HCT116 (cell line): ENCODE measurements at regions of chr14 and their contacts with region 1.

Region 1: GRCh38 chr14:73759714-73760597 is 45.8 kb upstream of the PNMA1 start:
- DNase-seq: peak; percentile 88
- ATAC-seq: peak; percentile 86
- H3K4me3 ChIP-seq: peak overlapping the region; percentile 79
- H3K27ac ChIP-seq: peak overlapping the region; percentile 95
- H3K4me1 ChIP-seq: peaks cover 29 to 65% of the 10 kb centered on the region in 2 experiments
- H3K27me3 ChIP-seq: no peaks in the 10 kb centered on the region
- CTCF ChIP-seq: no peak
- POLR2A ChIP-seq: peak; percentile 76
- RAD21 ChIP-seq: no peak

Region 2: DNA sequence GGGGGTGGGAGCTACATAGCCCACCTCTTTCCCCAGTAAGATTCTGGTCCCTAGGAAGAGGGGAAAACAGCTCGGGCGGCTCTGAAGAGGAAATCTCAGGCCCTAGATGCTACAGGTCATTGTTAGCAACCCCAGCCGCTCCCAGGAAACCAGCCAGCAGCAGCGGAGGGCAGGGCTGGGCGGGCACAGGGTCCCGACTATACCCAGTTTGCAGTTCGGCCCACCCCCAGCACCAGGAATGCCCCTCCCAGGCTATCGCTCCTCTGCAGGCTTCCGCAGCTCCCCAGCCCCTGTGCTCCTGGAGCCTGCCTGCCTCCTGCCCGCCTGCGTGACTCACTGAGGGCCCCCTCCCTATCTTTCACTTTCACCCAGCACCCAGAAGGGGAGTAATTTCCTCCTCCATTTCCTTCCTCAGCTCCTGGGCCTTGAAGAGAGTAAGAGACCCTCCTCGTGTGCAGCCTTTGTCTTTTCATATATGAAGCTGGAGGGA is 18.5 kb before region 1 on chr14:
- CTCF ChIA-PET with region 1: interaction called, 27 read pairs
- POLR2A ChIA-PET with region 1: interaction called, 14 read pairs
- RAD21 ChIA-PET with region 1: interaction called in 1 of 2 experiments, 6 read pairs
- intact Hi-C with region 1: loop called (anchors 1 kb)
- DNase-seq: no peak
- ATAC-seq: peak; percentile 67
- H3K4me3 ChIP-seq: peak overlapping the region; percentile 37 to 52
- H3K27ac ChIP-seq: peak overlapping the region; percentile 84
- H3K4me1 ChIP-seq: peaks cover 66 to 72% of the 10 kb centered on the region in 2 experiments
- H3K27me3 ChIP-seq: no peaks in the 10 kb centered on the region
- CTCF ChIP-seq: no peak
- POLR2A ChIP-seq: no peak
- RAD21 ChIP-seq: no peak

Region 3: DNA sequence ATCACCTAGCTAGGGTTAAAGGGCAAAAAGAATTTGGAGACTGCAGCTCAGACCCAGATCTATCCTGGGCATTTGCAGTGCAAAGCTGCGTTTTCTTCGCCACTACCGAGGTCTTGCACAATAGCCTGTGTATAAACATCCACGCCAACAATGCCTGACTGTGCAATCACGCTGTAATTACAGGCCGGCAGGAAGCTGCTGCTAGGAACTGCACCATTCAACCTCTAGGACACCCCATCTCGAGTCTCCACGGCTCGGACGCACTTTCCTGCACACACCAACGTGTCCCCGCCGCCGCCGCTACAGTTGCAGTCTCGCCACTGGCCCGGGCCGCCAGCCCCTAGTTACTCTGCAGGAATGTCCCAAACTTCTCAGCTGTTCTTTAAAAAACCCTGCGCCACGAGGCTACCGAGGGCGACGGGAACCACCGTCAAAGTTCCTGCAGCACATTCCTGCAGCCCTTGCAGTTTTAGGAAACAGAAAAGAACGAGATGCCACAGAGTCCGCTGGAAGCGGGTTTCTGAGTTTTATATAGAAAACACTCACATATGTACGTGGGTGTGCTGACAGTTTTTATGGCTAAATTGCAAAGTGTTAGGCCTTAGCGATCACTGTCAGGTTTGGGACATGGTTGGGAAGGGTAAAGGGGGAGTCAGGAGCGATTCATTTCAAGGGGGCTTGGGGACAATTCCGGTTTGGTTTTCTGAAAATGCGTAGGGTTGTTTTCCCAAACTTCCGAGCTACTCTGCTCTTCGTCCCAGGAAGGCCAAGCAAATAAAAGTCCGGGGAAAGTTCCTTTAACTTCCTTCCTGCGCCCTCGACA is 26.1 kb after region 1 on chr14:
- CTCF ChIA-PET with region 1: interaction called, 4 read pairs
- POLR2A ChIA-PET with region 1: interaction called, 11 read pairs
- RAD21 ChIA-PET with region 1: no interaction called
- intact Hi-C with region 1: loop called (anchors 1 kb)
- DNase-seq: peak; percentile 46
- ATAC-seq: peak; percentile 67
- H3K4me3 ChIP-seq: peak overlapping the region; percentile 68 to 74
- H3K27ac ChIP-seq: peak overlapping the region; percentile 94
- H3K4me1 ChIP-seq: peaks cover 22 to 31% of the 10 kb centered on the region in 2 experiments
- H3K27me3 ChIP-seq: no peaks in the 10 kb centered on the region
- CTCF ChIP-seq: peak in 1 of 3 experiments; percentile 2; a peak in 1 of 6 replicates
- POLR2A ChIP-seq: no peak
- RAD21 ChIP-seq: no peak

Region 4: DNA sequence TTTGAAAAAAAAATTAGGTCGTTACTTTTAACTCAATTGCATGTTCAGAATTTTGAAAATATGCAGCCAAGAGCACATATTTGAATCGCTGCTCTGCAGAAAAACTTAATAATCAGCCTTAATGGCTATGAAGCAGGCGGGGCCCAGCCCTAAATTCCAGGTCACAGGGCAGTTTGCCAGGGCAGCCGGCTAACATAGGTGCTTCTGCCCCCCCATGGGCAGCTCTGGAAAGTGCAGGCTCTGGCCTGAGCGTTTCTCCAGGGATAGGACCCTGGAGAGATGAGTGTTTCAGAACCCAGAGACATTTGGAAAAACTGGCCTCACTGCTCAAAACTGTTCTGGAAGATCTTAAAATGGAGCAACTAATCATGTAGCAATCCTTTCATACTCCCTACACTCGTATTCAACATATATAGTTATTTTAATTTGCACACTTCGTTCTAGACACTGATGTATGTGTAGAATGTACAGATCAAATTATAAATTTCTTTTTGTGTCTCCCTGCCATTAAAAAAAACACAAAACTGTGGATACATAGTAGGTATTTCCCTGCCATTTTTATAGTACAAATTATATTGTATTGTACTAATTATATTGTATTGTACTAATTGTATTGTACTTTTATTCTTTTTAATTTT is 65.7 kb after region 1 on chr14:
- CTCF ChIA-PET with region 1: no interaction called
- POLR2A ChIA-PET with region 1: interaction called, 4 read pairs
- RAD21 ChIA-PET with region 1: interaction called in 1 of 2 experiments, 11 read pairs
- intact Hi-C with region 1: loop called (anchors 1 kb)
- DNase-seq: peak; percentile 76
- ATAC-seq: peak; percentile 96
- H3K4me3 ChIP-seq: no peak overlapping the region
- H3K27ac ChIP-seq: no peak overlapping the region
- H3K4me1 ChIP-seq: peaks cover 0 to 10% of the 10 kb centered on the region in 2 experiments; a peak in 2 of 4 replicates
- H3K27me3 ChIP-seq: no peaks in the 10 kb centered on the region
- CTCF ChIP-seq: peak; percentile 84 to 90 (median 90)
- POLR2A ChIP-seq: no peak
- RAD21 ChIP-seq: peak; percentile 89

Region 5: GRCh38 chr14:73851644-73852382 is 91.9 kb after region 1 on chr14 and contains the start of gene PTGR2:
- CTCF ChIA-PET with region 1: interaction called, 8 read pairs
- POLR2A ChIA-PET with region 1: interaction called, 4 read pairs
- RAD21 ChIA-PET with region 1: no interaction called
- intact Hi-C with region 1: loop called (anchors 5 kb)
- DNase-seq: peak; percentile 94
- ATAC-seq: peak; percentile 89
- H3K4me3 ChIP-seq: peak within 1 kb of the TSS; percentile 81 to 94
- H3K27ac ChIP-seq: peak within 1 kb of the TSS; percentile 97
- H3K4me1 ChIP-seq: peaks cover 17 to 30% of the 10 kb centered on the region in 2 experiments
- H3K27me3 ChIP-seq: no peaks in the 10 kb centered on the region
- CTCF ChIP-seq: 0 out of 6 replicates have a peak, but pooled peaks of 1 of the 3 experiments have one; percentile 4
- POLR2A ChIP-seq: peak; percentile 69
- RAD21 ChIP-seq: 0 out of 2 replicates have a peak, but pooled peaks have one; percentile 6
- total RNA-seq, gene PTGR2: 22.1 TPM

Region 6: DNA sequence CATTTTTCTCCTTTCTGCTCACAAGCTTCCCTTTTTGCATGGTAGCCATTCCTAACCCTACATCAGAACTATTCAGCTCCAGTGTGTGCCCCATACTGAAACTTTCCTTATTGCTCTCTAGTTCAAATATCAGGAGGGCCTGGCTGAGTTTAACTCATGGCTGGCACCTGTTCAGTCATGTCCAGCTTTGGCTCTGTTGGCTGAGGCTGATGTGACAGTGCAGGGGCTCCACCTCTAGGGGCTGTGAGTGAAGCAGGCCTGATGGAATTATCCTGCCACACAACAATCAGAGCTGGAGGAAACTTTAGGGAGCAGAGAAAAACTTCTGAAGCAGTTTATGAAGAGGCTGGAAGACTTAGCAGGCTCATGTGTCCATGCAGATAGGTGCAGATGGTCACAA is 198.6 kb after region 1 on chr14:
- CTCF ChIA-PET with region 1: no interaction called
- POLR2A ChIA-PET with region 1: no interaction called
- RAD21 ChIA-PET with region 1: no interaction called
- intact Hi-C with region 1: no loop called
- DNase-seq: no peak
- ATAC-seq: peak; percentile 63; the same call in 1 of the 2 replicates
- H3K4me3 ChIP-seq: no peak overlapping the region
- H3K27ac ChIP-seq: no peak overlapping the region
- H3K4me1 ChIP-seq: no peaks in the 10 kb centered on the region
- H3K27me3 ChIP-seq: no peaks in the 10 kb centered on the region
- CTCF ChIP-seq: no peak
- POLR2A ChIP-seq: no peak
- RAD21 ChIP-seq: no peak